ENCODE measurements at regions of chrX and their contacts with region 1.

Region 1: GRCh38 chrX:15761564-15762191 is 23.6 kb downstream of the CA5B start:
- DNase-seq: peak; percentile 49
- H3K4me3 Mint-ChIP-seq: no peak overlapping the region
- H3K27ac Mint-ChIP-seq: peak overlapping the region; percentile 80
- H3K4me1 Mint-ChIP-seq: peaks cover 49% of the 10 kb centered on the region
- H3K27me3 Mint-ChIP-seq: no peaks in the 10 kb centered on the region

Region 2: GRCh38 chrX:15686818-15687685 is 74.6 kb before region 1 on chrX:
- CTCF ChIA-PET with region 1: no interaction called
- POLR2A ChIA-PET with region 1: no interaction called
- intact Hi-C with region 1: loop called (anchors 1 kb)
- DNase-seq: peak; percentile 55
- H3K4me3 Mint-ChIP-seq: no peak overlapping the region
- H3K27ac Mint-ChIP-seq: no peak overlapping the region
- H3K4me1 Mint-ChIP-seq: peaks cover 8% of the 10 kb centered on the region
- H3K27me3 Mint-ChIP-seq: no peaks in the 10 kb centered on the region

Region 3: DNA sequence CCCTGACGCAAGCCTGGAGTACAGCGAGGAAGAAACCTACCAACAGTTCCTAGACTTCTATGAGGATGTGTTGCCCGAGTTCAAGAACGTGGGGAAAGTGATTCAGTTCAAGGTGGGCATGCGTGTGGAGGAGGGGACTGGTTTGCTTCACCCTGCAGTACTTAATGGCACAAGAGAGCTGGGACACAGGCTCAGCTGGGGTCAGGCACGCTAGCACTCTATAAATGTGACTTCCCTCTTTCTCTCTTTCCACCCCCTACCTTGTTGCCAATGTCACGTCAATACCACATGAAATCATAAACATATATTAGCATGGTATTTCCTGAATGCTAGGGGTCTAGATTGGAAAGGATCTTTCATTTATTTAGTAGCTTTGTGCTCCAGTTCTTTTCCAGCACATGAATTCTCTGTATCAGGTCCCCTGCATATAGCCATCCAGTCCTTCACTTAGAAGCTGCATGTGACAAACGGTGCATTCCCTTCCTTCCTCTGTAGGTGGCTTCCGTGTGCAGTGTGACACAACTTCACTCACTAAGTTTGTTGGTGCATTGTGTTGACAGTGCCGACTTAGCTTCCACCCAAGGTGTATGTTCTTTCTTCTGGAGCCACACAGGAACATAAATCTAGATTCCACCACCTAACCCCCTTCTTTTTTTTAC is 54.2 kb after region 1 on chrX:
- CTCF ChIA-PET with region 1: no interaction called
- POLR2A ChIA-PET with region 1: no interaction called
- intact Hi-C with region 1: loop called (anchors 2 kb)
- DNase-seq: peak; percentile 46
- H3K4me3 Mint-ChIP-seq: no peak overlapping the region
- H3K27ac Mint-ChIP-seq: peak overlapping the region; percentile 23
- H3K4me1 Mint-ChIP-seq: peaks cover 37% of the 10 kb centered on the region
- H3K27me3 Mint-ChIP-seq: no peaks in the 10 kb centered on the region

Region 4: GRCh38 chrX:15973299-15973698 is 211.6 kb after region 1 on chrX:
- CTCF ChIA-PET with region 1: no interaction called
- POLR2A ChIA-PET with region 1: no interaction called
- intact Hi-C with region 1: loop called (anchors 2 kb)
- DNase-seq: peak; percentile 30
- H3K4me3 Mint-ChIP-seq: no peak overlapping the region
- H3K27ac Mint-ChIP-seq: no peak overlapping the region
- H3K4me1 Mint-ChIP-seq: no peaks in the 10 kb centered on the region
- H3K27me3 Mint-ChIP-seq: no peaks in the 10 kb centered on the region

Region 5: DNA sequence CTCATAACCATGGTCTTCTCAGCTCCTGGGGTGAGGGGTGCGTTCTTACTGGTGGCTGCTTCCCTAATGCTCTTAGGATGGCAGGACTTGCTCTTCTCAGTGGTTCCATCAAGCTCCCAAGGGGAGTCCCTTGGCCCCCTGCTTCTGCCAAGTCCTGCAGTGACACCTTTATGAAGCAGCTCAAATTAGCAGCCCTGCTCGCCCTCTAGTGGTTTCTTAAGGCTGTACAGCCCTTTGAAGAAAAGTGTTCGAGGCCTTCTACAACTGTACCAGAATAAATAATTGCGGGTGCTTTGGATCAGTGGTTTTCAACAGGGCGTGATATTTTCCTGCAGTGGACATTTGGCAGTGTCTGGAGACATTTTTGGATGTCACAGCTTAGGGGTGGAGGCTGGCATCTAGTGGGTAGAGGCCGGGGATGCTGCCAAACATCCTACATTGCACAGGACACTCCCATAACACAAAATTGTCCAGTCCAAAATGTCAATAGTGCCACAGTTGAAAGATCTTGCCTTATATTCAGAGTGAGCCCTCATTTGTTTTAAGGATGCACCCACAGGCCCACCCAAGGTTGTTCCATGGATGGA is 683.6 kb after region 1 on chrX:
- CTCF ChIA-PET with region 1: no interaction called
- POLR2A ChIA-PET with region 1: no interaction called
- intact Hi-C with region 1: loop called (anchors 10 kb)
- DNase-seq: peak; percentile 48
- H3K4me3 Mint-ChIP-seq: no peak overlapping the region
- H3K27ac Mint-ChIP-seq: no peak overlapping the region
- H3K4me1 Mint-ChIP-seq: peaks cover 6% of the 10 kb centered on the region
- H3K27me3 Mint-ChIP-seq: no peaks in the 10 kb centered on the region